ENCODE measurements at regions of chr5 and their contacts with region 1.

Region 1: GRCh38 chr5:52564587-52564986 is 223.1 kb upstream of the ITGA1 start:
- DNase-seq: no peak
- ATAC-seq: no peak
- H3K4me3 ChIP-seq: no peak overlapping the region
- H3K27ac ChIP-seq: no peak overlapping the region
- H3K4me1 ChIP-seq: no peaks in the 10 kb centered on the region
- H3K27me3 ChIP-seq: no peaks in the 10 kb centered on the region
- CTCF ChIP-seq: no peak

Region 2: GRCh38 chr5:52419357-52419756 is 145.2 kb before region 1 on chr5:
- CTCF ChIA-PET with region 1: no interaction called
- POLR2A ChIA-PET with region 1: no interaction called
- in situ Hi-C with region 1: no loop called
- intact Hi-C with region 1: no loop called
- DNase-seq: no peak
- ATAC-seq: no peak
- H3K4me3 ChIP-seq: no peak overlapping the region
- H3K27ac ChIP-seq: no peak overlapping the region
- H3K4me1 ChIP-seq: no peaks in the 10 kb centered on the region
- H3K27me3 ChIP-seq: no peaks in the 10 kb centered on the region; the same call in 1 of the 2 replicates
- CTCF ChIP-seq: no peak

Region 3: GRCh38 chr5:52544738-52545137 is 19.8 kb before region 1 on chr5:
- CTCF ChIA-PET with region 1: no interaction called
- POLR2A ChIA-PET with region 1: no interaction called
- in situ Hi-C with region 1: no loop called
- intact Hi-C with region 1: loop called (anchors 1 kb)
- DNase-seq: no peak
- ATAC-seq: no peak
- H3K4me3 ChIP-seq: no peak overlapping the region
- H3K27ac ChIP-seq: no peak overlapping the region
- H3K4me1 ChIP-seq: no peaks in the 10 kb centered on the region
- H3K27me3 ChIP-seq: no peaks in the 10 kb centered on the region
- CTCF ChIP-seq: no peak